K562 (cell line): ENCODE measurements at regions of chr9 and their contacts with region 1.

Region 1: DNA sequence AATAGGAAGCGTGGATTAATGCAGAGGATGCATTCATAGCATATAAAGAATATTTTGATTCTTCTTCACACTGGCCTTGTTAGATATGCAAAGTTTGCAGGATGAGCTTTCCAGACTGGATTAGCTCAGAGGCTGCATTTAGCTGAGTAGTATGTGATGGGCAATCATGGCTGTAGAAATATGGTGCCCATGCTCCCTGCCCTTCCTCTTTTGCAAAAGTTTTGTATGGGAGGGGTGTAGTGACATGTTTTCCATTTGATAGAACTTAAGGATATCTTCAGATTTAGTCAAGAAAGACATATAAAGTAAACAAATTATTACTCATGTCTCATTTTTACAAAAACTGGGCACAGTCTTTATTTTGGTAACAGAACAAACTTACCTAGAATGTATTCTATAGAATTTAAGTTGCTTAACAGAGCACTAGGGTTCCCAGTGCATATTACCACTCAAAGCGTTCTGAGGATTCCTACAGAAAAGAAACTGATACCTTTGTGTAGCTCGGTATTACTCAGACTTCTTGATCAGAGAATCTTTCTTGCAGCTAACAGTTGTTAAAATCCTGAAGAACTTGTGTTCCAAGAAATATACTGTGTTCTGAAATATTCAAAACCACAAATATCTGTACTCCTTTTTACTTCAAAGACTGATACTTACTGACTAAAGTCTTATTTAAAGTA is 9.8 kb downstream of the GTF3C4 start:
- DNase-seq: no peak
- ATAC-seq: no peak
- H3K4me3 ChIP-seq: no peak overlapping the region
- H3K27ac ChIP-seq: no peak overlapping the region
- H3K4me1 ChIP-seq: no peaks in the 10 kb centered on the region
- H3K27me3 ChIP-seq: no peaks in the 10 kb centered on the region
- CTCF ChIP-seq: no peak
- EP300 ChIP-seq: no peak
- POLR2A ChIP-seq: no peak
- RAD21 ChIP-seq: no peak

Region 2: GRCh38 chr9:132669698-132670456 is 10.2 kb before region 1 on chr9 and contains the start of gene DDX31:
- CTCF ChIA-PET with region 1: no interaction called
- POLR2A ChIA-PET with region 1: interaction called, 11 read pairs
- in situ Hi-C with region 1: no loop called
- intact Hi-C with region 1: no loop called
- DNase-seq: peak; percentile 84 to 91 (median 88)
- ATAC-seq: peak; percentile 93
- H3K4me3 ChIP-seq: peak within 1 kb of the TSS; percentile 98
- H3K27ac ChIP-seq: peak within 1 kb of the TSS; percentile 99
- H3K4me1 ChIP-seq: peaks cover 3 to 22% of the 10 kb centered on the region in 2 experiments; a peak in 4 of 5 replicates
- H3K27me3 ChIP-seq: no peaks in the 10 kb centered on the region
- CTCF ChIP-seq: no peak
- EP300 ChIP-seq: no peak; the same call in 1 of the 2 replicates
- POLR2A ChIP-seq: peak; percentile 85
- RAD21 ChIP-seq: no peak
- polyA plus RNA-seq, gene DDX31: 11.9 to 18.7 TPM

Region 3: DNA sequence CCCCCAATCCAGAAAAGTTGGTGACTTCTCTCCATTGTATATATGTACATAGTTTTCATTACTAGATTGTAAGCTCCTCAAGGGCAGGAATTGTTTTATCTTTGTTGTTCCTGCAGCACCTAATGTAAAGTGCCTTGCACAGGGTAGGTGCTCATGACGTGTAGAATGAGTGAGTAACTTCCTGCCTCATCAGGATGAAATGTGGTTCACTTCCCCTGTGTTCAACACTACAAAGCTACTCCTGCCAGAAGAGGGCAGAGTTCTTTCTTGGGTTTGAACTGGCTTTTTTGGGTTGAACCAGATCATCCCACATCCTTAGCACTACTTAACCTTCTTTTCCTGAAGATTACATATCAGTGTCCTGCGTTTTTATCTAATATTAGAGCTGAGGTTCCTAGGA is 14.1 kb after region 1 on chr9:
- CTCF ChIA-PET with region 1: no interaction called
- POLR2A ChIA-PET with region 1: interaction called, 11 read pairs
- in situ Hi-C with region 1: no loop called
- intact Hi-C with region 1: no loop called
- DNase-seq: peak in 3 of 4 experiments; percentile 27 to 28 (median 27)
- ATAC-seq: peak; percentile 57
- H3K4me3 ChIP-seq: no peak overlapping the region
- H3K27ac ChIP-seq: no peak overlapping the region
- H3K4me1 ChIP-seq: no peaks in the 10 kb centered on the region
- H3K27me3 ChIP-seq: no peaks in the 10 kb centered on the region
- CTCF ChIP-seq: peak; percentile 5 to 31 (median 21); a peak in 2 of 6 replicates
- EP300 ChIP-seq: no peak
- POLR2A ChIP-seq: no peak
- RAD21 ChIP-seq: peak in 1 of 2 experiments; percentile 39; a peak in 2 of 4 replicates